Activated CD4-positive, alpha-beta memory T cell treated with anti-CD3 and anti-CD28 coated beads for 36 hours (primary cell): ENCODE measurements at regions of chr12 and their contacts with region 1.

Region 1: DNA sequence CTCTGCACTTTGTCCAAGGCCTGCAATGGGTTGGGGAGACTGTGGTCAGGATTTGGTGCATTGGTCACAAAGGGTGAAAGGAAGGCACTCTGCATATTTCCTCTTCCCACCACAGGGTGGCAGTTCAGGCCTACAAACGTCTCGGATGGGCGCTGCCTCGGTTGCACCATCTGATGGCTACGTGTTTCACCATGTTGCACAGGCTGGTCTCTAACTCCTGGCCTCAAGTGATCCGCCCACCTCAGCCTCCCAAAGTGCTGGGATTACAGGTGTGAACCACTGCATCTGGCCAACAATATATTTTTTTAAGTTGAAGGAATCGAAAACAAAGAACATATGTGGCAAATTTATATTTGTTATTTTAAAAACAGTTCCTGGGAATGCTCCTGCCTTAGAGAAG is 35.1 kb downstream of the TMBIM6 start:
- DNase-seq: peak; percentile 79
- H3K4me3 Mint-ChIP-seq: no peak overlapping the region
- H3K27ac Mint-ChIP-seq: no peak overlapping the region
- H3K4me1 Mint-ChIP-seq: peaks cover 13% of the 10 kb centered on the region
- H3K27me3 Mint-ChIP-seq: peaks cover 14% of the 10 kb centered on the region

Region 2: DNA sequence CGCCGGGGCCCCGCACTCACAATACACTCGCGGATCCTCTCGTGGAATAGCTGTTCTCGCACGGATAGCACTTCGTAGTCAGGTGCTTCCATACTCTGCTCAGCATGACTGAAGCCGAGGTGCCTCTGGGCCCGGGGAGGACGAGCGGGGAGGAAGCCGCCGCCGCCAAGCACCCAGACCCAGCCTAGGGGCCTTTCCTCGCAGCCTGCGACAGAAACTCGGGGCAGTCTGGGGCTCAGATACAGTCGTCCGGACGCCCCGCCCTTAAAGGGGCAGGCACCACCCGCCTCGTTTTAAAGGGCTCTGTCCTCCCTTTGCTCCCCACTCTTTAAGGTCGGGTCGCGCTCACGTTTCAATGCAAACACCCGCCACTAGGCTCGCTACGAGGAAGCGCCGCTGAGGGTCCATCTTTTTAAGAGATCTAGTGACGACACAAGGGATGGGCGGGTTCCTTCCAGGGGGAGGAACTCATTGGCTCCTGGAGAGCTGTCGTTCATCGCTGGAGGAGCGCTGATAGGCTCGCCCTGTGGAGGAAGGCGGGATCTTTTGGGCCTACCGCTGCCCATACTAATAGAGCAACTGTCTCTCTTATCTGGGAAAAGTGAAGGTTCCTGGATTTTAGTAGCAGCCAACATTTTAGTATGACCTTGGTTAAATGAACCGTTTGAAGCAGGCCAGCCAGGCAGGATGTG is 665.8 kb before region 1 on chr12 and contains the start of gene LMBR1L:
- CTCF ChIA-PET with region 1: no interaction called
- POLR2A ChIA-PET with region 1: no interaction called
- intact Hi-C with region 1: no loop called
- DNase-seq: peak; percentile 97
- H3K4me3 Mint-ChIP-seq: peak within 1 kb of the TSS; percentile 95
- H3K27ac Mint-ChIP-seq: peak within 1 kb of the TSS; percentile 80
- H3K4me1 Mint-ChIP-seq: peaks cover 24% of the 10 kb centered on the region
- H3K27me3 Mint-ChIP-seq: no peaks in the 10 kb centered on the region
- total RNA-seq, gene LMBR1L: 55.0 to 59.1 TPM

Region 3: DNA sequence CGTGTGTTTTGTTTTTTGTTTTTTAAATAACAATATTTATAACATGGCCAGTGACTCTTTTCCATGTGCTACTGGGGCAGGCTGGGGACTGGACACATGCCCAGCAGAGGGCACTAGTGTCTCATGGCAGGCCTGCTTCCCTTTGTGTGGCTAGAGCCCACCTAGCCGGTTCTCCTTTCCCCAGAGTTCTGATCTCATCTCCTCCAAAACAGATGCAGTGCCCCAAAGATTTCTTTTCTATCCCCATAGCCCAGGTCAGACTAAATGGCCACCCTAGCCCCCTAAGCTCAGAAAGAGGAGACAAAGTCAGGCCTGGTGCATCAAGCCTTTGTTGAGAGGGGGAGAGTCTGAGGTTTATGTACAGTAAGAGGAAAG is 131.8 kb before region 1 on chr12:
- CTCF ChIA-PET with region 1: interaction called, 12 read pairs
- POLR2A ChIA-PET with region 1: no interaction called
- intact Hi-C with region 1: no loop called
- DNase-seq: peak; percentile 86
- H3K4me3 Mint-ChIP-seq: no peak overlapping the region
- H3K27ac Mint-ChIP-seq: peak overlapping the region; percentile 74
- H3K4me1 Mint-ChIP-seq: peaks cover 13% of the 10 kb centered on the region
- H3K27me3 Mint-ChIP-seq: no peaks in the 10 kb centered on the region

Region 4: DNA sequence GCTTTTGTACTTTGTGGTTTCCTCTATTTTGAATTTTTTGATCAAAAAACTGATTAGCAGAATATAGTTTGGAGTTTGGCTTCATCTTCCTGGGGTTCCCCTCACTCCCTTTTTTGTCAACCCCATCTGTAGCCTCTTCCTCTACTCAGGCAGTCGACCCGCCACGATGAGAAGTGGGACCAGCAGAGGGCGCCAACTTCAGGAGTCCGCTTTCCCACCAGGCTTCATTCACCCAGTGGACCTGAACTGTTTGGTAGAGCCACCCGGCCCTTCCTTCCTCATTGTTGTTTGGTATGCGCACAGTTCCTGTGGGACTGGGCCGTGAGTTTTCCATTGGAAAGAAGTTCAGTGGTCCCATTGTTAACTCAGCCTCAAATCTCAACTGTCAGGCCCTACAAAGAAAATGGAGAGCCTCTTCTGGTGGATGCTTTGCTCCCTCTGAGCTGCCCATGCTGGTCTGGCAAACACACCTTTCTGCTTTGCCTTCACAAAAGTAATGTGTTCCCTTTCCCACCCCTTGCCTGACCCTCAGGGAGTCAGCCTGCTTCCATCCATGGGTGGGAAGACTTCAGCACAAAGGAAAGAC is 13.3 kb before region 1 on chr12:
- CTCF ChIA-PET with region 1: interaction called, 66 read pairs
- POLR2A ChIA-PET with region 1: interaction called, 3 read pairs
- intact Hi-C with region 1: loop called (anchors 2 kb)
- DNase-seq: peak; percentile 89
- H3K4me3 Mint-ChIP-seq: peak overlapping the region; percentile 49
- H3K27ac Mint-ChIP-seq: peak overlapping the region; percentile 95
- H3K4me1 Mint-ChIP-seq: peaks cover 59% of the 10 kb centered on the region
- H3K27me3 Mint-ChIP-seq: no peaks in the 10 kb centered on the region

Region 5: DNA sequence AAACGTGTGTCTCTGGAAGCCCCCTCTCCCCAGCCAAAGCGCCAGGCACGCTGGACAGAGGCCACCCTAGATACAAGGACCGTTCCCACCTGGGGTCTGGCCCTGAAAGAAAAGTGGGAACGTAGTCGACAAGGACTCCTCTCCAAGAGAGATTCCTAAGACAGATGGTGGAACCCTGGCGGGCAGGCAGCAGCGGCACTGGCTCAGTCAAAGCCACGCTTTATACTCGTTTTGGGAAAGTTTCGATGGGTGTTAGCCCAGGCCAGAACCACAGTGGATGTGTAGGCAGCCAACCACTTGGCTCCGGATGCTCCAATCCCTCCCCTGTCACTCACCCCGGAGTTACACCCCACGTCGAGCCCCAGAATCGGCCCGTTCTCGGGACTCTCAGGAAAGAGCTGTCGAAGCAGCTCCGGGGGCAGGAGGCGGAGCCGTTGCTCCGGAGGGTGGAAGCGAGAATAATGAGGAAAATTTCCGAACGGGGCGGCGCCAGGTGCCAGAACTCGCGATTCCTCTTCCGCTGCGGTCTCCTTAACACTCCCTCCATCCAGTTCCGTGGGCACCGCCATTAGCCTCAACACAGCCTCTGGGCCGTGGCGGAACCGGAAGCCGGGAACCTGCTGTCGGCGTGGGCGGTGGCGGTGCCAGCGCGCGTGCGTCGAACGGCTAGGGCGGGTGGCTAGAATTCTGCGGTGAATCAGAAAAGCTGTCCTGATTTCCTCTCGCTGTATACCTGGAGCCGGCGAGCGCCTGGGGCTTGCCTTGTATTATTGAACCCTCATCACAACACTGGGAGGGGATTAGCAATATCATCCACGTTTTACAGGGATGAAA is 66.3 kb after region 1 on chr12 and contains the start of gene BCDIN3D:
- CTCF ChIA-PET with region 1: interaction called, 28 read pairs
- POLR2A ChIA-PET with region 1: no interaction called
- intact Hi-C with region 1: loop called (anchors 1 kb)
- DNase-seq: peak; percentile 97
- H3K4me3 Mint-ChIP-seq: peak within 1 kb of the TSS; percentile 90
- H3K27ac Mint-ChIP-seq: peak within 1 kb of the TSS; percentile 94
- H3K4me1 Mint-ChIP-seq: peaks cover 33% of the 10 kb centered on the region
- H3K27me3 Mint-ChIP-seq: no peaks in the 10 kb centered on the region
- total RNA-seq, gene BCDIN3D: 5.8 to 6.1 TPM

Region 6: DNA sequence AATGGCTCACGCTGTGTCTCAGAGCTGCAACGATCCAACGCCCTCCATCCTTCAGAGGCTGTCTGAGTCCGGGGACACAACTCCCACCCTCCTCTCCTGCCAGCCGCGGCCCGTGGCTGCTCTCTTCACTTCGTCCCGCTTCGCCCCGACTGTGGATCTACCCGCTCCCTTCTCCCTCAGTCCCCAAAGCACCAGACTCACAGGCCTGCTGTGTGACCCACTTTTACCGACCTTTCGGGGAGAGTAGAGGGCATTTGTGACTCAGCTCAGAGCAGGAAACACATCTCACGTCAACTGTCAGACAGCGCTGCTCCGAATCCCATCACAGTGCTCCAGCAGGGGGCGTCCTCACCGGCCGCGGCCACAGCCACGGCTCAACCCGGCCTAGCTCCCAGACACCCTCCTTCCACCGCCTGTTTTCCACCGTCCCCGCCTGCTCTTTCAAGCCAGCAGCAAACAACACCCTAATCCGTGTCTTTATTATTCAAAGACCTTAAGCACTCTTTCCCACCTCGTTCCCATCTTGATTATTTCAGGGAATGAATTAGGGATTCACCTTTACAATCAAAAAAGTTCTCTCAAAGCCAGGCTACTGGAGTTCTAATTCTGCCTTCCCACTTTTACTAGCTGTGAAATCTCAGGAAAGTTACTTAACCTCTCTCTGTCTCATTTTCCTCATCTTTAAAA is 169.1 kb after region 1 on chr12:
- CTCF ChIA-PET with region 1: interaction called, 9 read pairs
- POLR2A ChIA-PET with region 1: no interaction called
- intact Hi-C with region 1: loop called (anchors 1 kb)
- DNase-seq: peak; percentile 93
- H3K4me3 Mint-ChIP-seq: peak overlapping the region; percentile 70
- H3K27ac Mint-ChIP-seq: peak overlapping the region; percentile 81
- H3K4me1 Mint-ChIP-seq: peaks cover 33% of the 10 kb centered on the region
- H3K27me3 Mint-ChIP-seq: no peaks in the 10 kb centered on the region

Region 7: DNA sequence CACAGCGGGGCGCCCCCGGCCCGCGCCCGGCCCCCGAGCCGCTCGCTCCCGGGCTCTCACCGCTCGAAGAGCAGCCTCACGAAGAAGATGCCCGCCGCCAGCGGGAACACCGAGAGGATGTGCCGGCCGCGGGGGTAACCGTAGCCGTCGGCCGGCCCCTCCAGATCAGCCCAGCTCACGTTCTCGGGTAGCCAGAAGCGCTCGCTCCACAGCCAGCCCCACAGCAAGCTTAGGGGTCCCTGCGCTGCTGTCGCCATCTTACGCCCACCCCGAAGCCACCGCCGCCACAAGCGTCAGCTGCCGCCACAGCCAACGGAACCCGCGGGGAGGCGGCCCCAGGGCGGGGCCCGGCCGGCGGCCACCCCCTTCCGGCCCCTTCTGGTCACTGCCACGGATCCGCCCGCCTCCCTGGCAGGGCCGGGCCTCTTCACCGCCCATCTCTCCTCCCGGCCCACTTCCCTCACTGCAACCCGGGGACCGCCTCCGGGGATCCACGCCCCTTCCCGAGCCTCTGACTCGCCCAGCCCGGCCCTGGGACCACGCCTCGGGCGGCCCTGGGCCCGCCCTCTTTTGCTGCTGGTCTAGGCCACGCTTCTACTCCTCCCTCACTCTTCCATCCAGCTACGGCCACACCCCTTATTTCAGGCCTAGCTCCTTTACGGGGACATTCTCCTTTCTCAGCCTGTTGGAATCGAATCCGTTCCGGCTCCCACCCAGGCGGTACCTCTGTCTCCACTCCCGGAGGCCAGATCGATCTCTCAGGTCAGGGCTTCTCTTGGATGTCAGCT is 390.8 kb after region 1 on chr12 and contains the start of gene CERS5:
- CTCF ChIA-PET with region 1: no interaction called
- POLR2A ChIA-PET with region 1: no interaction called
- intact Hi-C with region 1: no loop called
- DNase-seq: peak; percentile 99
- H3K4me3 Mint-ChIP-seq: peak within 1 kb of the TSS; percentile 84
- H3K27ac Mint-ChIP-seq: peak within 1 kb of the TSS; percentile 94
- H3K4me1 Mint-ChIP-seq: peaks cover 28% of the 10 kb centered on the region
- H3K27me3 Mint-ChIP-seq: no peaks in the 10 kb centered on the region
- total RNA-seq, gene CERS5: 59.5 to 63.0 TPM

Region 8: DNA sequence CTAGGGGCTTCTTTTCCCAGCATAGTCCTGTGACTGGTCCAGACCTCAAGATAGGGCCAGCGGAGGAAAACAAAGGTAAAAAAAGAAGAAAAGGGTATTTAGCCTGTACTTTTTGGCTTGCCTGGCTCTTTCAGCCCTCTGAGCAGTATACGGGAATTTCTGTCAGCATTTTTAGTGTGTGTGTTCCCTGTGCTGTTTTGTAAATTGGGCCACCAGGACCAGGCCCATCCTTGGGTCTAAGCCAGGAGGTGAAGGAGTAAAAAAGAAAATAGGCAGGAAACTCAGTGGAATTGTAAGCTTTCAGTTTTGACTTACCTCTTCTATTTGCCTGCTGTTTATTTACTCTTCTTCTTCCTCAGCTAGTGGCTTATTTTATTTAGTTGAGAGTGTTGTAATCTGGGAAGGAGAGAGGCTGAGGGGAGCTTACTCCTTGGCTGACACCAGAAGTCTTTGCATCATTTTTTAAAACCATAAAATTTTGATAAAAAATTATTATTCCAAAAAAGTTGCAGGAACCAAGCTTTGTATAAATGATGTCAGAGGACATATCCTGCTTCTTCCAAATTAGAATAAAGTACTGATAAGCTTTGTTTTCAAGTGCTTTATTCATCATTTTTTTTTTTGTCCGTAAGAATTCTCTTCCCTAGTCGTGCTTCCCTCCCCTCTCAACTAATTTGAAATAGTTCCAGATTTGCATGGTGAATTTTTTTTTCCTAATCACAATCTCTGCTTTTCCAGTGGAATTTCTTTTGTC is 792.1 kb after region 1 on chr12:
- CTCF ChIA-PET with region 1: no interaction called
- POLR2A ChIA-PET with region 1: no interaction called
- intact Hi-C with region 1: no loop called
- DNase-seq: no peak
- H3K4me3 Mint-ChIP-seq: no peak overlapping the region
- H3K27ac Mint-ChIP-seq: no peak overlapping the region
- H3K4me1 Mint-ChIP-seq: peaks cover 48% of the 10 kb centered on the region
- H3K27me3 Mint-ChIP-seq: no peaks in the 10 kb centered on the region